Lower leg skin (tissue), 4 donors: ENCODE measurements at regions of chr9 and their contacts with region 1.

Region 1: GRCh38 chr9:15306757-15307534 is at the start of gene TTC39B:
- DNase-seq: peak; percentile 92 to 98
- H3K4me3 ChIP-seq: peak within 1 kb of the TSS; percentile 77
- CTCF ChIP-seq: no peak
- POLR2A ChIP-seq: peak in 1 of 2 donors; percentile 34
- total RNA-seq, gene TTC39B: 38.4 to 53.3 (median 42.2) TPM

Region 2: DNA sequence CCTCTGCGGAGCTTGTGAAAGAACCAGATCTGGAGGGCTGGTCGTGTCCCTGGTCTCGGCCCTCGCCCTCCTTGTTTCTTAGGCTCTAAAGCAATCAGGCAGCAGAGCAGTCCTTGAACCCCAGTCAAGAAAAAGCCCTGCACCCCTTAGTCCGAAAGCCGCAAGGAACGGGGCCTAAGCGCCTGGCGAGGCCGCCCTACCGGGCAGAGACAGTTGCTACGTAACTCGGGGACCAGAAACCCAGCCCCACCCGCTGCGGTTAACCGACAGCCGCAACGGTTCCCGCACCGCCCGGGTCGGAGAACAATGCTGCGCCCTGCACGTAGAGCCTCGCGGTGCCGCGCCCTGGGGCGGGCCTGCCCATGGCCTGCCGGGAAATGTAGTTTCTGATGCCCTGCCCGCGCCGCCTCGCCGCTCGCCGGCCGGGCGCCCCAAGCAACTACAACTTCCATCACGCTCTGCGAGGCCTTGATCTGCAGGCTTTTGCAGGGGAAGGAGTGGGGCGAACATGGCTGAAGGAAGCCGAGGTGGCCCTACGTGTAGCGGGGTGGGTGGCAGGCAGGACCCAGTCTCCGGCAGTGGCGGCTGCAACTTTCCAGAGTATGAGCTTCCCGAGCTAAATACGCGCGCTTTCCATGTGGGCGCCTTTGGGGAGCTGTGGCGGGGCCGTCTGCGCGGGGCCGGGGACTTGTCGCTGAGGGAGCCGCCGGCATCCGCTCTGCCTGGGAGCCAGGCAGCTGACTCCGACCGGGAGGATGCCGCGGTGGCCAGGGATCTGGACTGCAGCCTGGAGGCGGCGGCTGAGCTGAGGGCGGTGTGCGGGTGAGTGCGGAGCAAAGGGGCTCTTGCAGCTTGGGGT is 115.7 kb after region 1 on chr9 and contains the start of gene SNAPC3:
- intact Hi-C with region 1: loop called (anchors 10 kb)
- DNase-seq: peak; percentile 91 to 98
- H3K4me3 ChIP-seq: peak within 1 kb of the TSS; percentile 98
- CTCF ChIP-seq: no peak
- POLR2A ChIP-seq: no peak
- total RNA-seq, gene SNAPC3: 15.1 to 20.2 (median 16.9) TPM